Activated CD8-positive, alpha-beta memory T cell treated with anti-CD3 and anti-CD28 coated beads, Interleukin-2, amount 10 ng/mL, durations not matched to agents 7 days and 5 days (primary cell): ENCODE measurements at regions of chr1 and their contacts with region 1.

Region 1: DNA sequence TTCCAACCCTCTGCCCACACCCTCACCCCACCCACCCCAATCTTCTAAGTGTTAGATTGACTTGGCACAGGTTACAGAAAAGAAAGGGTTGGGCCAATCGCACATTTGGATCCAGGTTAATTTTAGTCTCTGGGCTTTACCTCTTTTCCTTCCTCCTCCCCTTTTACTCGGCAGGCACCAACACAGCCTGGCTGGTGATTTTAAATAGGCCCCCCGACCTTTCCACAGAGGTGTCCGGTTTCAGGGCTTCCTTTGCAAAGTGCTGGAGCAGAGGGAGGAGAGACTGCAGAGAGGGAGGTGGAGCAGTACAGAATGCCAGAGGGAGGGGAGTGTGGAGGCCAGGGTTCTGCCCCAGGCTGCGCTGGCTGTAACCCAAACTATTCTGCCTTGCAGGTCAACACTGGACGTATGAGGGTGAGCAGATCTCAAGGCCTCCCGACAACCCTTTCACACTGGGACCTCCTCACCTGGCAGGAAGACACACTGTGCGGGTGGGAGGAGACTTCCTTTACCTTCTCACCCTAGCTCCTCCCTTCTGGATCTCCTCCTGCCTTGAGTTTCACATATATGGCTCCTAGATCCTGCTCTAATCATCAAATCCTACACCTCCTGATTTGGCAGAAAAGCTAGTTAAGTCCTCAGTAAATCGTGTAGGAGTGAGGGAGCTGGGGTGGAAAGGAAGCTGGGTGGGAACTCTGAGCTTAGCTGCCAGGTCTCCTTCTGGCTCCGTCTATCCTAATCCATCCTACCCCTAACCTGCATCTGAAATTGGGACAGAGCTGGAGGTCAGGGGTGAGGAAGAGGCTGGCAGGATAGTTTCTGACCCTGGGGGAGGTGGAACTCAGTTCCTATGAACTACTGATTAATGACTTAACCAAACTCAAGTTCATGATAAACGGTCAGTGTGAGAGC is 2.4 kb downstream of the CA14 start:
- DNase-seq: no peak
- ATAC-seq: no peak
- H3K4me3 Mint-ChIP-seq: no peak overlapping the region
- H3K27ac Mint-ChIP-seq: no peak overlapping the region
- H3K4me1 Mint-ChIP-seq: peaks cover 20% of the 10 kb centered on the region
- H3K27me3 Mint-ChIP-seq: peaks cover 40% of the 10 kb centered on the region

Region 2: GRCh38 chr1:150281837-150282653 is 22.0 kb after region 1 on chr1 and contains the start of gene CIART:
- CTCF ChIA-PET with region 1: interaction called, 89 read pairs
- DNase-seq: peak; percentile 88
- ATAC-seq: peak; percentile 95
- H3K4me3 Mint-ChIP-seq: peak within 1 kb of the TSS; percentile 81
- H3K27ac Mint-ChIP-seq: peak within 1 kb of the TSS; percentile 71
- H3K4me1 Mint-ChIP-seq: peaks cover 23% of the 10 kb centered on the region
- H3K27me3 Mint-ChIP-seq: peaks cover 7% of the 10 kb centered on the region
- total RNA-seq, gene CIART: 0.44 to 1.7 TPM

Region 3: DNA sequence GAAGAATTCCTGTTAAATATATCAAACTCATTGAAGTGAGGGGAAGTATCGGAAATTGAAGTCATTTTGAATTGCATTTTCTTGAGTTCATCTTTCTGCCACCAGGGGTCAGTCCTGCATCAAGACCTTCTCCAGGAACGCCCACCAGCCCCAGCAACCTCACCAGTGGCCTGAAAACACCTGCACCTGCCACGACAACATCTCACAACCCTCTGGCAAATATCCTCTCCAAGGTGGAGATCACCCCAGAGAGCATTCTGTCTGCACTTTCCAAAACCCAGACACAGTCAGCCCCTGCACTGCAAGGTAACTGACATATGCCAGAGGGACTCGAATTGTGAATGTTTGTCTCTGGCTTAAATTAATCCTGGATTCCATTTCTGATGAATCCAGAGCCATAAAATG is 204.4 kb after region 1 on chr1:
- CTCF ChIA-PET with region 1: interaction called, 11 read pairs
- DNase-seq: peak; percentile 74
- ATAC-seq: peak; percentile 76
- H3K4me3 Mint-ChIP-seq: no peak overlapping the region
- H3K27ac Mint-ChIP-seq: no peak overlapping the region
- H3K4me1 Mint-ChIP-seq: peaks cover 4% of the 10 kb centered on the region
- H3K27me3 Mint-ChIP-seq: no peaks in the 10 kb centered on the region

Region 4: DNA sequence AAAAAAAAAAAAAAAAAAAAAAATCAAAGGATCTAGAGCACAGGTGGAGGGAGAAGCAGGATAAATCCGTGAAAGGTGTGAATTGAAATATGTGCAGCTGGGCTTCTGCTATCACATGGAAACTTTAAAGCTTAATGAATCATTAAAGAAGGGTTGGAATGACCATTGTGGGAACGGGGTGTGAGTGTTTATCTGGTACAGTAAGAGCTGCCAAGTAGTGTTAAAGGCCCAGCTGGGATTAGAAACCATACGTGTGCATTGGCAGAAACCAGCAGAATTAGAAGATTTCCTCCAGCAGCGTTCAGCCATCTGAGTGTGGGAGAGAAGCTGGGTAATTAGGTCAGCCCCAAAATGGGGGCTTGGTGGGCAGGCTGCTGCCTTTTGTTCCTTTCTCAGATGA is 269.0 kb after region 1 on chr1:
- CTCF ChIA-PET with region 1: interaction called, 13 read pairs
- DNase-seq: no peak
- ATAC-seq: no peak
- H3K4me3 Mint-ChIP-seq: no peak overlapping the region
- H3K27ac Mint-ChIP-seq: no peak overlapping the region
- H3K4me1 Mint-ChIP-seq: no peaks in the 10 kb centered on the region
- H3K27me3 Mint-ChIP-seq: no peaks in the 10 kb centered on the region

Region 5: DNA sequence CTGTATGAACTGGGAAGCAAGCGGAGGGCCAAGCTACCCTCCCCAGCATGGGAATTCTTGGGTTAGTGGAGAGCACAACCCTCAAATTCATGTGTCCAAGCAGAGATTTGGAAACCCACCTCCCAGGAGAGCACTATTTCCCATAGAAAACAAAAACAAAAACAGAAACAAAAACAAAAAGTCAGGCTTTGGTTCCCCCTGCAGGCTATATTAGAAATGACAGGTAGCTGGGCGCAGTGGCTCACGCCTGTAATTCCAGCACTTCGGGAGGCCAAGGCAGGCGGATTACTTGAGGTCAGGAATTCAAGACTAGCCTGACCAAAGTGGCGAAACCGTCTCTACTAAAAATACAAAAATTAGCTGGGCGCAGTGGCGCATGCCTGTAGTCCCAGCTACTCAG is 735.9 kb after region 1 on chr1:
- CTCF ChIA-PET with region 1: interaction called, 14 read pairs
- DNase-seq: peak; percentile 56
- ATAC-seq: peak; percentile 46
- H3K4me3 Mint-ChIP-seq: peak overlapping the region; percentile 23
- H3K27ac Mint-ChIP-seq: peak overlapping the region; percentile 49
- H3K4me1 Mint-ChIP-seq: peaks cover 15% of the 10 kb centered on the region
- H3K27me3 Mint-ChIP-seq: no peaks in the 10 kb centered on the region